Naive thymus-derived CD4-positive, alpha-beta T cell (primary cell): ENCODE measurements at regions of chr6 and their contacts with region 1.

Region 1: DNA sequence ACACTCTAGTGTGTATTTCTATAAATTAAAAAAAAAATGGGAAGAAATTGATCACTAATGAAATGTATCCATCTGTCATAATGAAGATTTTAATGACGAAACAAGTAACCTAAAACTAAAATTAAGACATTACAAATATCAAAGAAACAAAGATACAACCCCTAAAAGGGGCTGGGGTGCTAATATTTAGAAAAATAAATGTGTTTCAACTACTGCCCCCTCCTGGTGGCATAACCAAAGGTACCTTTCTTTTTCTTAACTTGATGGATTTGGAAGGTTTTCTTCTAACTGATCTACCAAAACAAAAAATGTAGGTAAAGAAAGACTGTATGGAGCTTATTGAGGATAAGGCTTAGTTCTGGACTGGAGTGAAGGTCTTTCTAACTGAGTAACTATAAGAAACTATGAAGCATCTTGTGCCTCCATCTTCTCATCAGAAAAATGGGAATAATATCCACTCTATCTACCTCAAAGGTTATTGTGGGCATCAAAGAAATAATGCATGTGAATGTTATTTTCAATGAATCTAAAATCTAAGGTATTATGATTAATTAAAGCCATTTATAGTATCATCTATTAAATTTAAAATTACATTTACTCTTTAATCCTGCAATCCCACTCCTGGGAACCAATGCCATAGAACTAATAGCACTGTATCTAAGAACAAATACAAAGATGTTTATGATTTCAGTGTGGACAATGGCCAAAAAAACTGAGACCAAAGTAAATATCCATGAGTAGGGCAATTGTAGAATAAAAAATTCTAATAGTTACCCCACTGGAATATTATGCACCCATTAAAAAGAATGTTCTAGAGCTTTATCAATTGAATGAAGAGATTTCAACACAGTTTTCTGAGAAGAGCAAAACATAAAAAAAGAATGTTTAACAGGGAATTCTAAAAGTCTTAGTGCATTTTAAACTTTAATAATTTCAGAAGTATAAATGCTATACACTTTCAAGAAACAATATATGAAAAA is 117.2 kb downstream of the BACH2 start:
- DNase-seq: peak in 3 of 9 donors; percentile 39 to 53 (median 43)
- ATAC-seq: no peak
- H3K4me3 ChIP-seq: no peak overlapping the region
- H3K4me3 Mint-ChIP-seq: peak overlapping the region in 5 of 10 donors; percentile 8 to 83 (median 72)
- H3K27ac ChIP-seq: peak overlapping the region; percentile 64
- H3K27ac Mint-ChIP-seq: peak overlapping the region in 8 of 9 donors; percentile 58 to 97 (median 88)
- H3K4me1 ChIP-seq: peaks cover 0 to 69% of the 10 kb centered on the region in 2 donors
- H3K4me1 Mint-ChIP-seq: peaks cover 49 to 92% (median 86%) of the 10 kb centered on the region in 7 donors
- H3K27me3 ChIP-seq: no peaks in the 10 kb centered on the region
- H3K27me3 Mint-ChIP-seq: no peaks in the 10 kb centered on the region

Region 2: DNA sequence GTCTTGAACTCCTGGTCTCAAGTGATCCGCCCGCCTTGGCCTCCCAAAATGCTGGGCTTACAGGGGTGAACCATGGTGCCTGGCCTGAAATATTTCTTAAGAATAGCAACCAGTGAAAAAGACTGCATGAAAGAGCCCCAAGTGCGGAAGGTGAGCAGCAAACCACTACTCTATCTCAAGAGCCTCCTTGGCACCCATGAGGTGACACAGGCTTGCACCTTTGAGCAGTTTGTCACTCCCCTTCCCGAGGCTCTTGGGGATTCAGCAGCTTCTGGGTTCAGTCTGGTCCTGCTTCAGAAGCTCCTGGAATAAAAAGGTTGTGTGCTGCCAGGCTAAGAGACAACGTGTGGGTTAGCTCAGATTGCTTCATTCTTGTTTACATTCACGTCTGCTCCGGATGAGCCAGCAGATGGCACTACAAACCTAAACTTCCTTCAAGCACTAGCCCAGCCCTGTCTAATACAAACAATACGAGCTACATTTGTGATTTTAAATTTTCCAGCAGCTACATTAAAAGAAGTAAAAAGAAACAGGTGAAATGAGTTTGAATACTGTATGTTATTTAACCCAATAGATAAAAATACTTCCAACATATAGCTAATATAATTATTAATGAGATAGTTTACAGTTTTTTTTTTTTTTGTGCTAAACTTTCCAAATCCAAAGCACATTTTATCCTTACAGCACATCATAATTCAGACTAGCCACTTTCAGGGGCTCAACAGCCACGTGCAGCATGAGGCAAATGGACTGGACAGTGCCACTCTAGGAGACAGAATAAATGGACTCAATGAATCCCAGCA is 239.1 kb before region 1 on chr6:
- CTCF ChIA-PET with region 1: interaction called, 8 read pairs
- POLR2A ChIA-PET with region 1: no interaction called
- intact Hi-C with region 1: loop called (anchors 1 kb)
- DNase-seq: peak; percentile 22 to 80 (median 70)
- ATAC-seq: peak; percentile 90
- H3K4me3 ChIP-seq: no peak overlapping the region
- H3K4me3 Mint-ChIP-seq: peak overlapping the region in 1 of 10 donors; percentile 48
- H3K27ac ChIP-seq: peak overlapping the region; percentile 53
- H3K27ac Mint-ChIP-seq: peak overlapping the region in 8 of 9 donors; percentile 50 to 91 (median 78)
- H3K4me1 ChIP-seq: peaks cover 0 to 9% of the 10 kb centered on the region in 2 donors
- H3K4me1 Mint-ChIP-seq: peaks cover 6 to 75% (median 39%) of the 10 kb centered on the region in 7 donors
- H3K27me3 ChIP-seq: no peaks in the 10 kb centered on the region
- H3K27me3 Mint-ChIP-seq: no peaks in the 10 kb centered on the region

Region 3: DNA sequence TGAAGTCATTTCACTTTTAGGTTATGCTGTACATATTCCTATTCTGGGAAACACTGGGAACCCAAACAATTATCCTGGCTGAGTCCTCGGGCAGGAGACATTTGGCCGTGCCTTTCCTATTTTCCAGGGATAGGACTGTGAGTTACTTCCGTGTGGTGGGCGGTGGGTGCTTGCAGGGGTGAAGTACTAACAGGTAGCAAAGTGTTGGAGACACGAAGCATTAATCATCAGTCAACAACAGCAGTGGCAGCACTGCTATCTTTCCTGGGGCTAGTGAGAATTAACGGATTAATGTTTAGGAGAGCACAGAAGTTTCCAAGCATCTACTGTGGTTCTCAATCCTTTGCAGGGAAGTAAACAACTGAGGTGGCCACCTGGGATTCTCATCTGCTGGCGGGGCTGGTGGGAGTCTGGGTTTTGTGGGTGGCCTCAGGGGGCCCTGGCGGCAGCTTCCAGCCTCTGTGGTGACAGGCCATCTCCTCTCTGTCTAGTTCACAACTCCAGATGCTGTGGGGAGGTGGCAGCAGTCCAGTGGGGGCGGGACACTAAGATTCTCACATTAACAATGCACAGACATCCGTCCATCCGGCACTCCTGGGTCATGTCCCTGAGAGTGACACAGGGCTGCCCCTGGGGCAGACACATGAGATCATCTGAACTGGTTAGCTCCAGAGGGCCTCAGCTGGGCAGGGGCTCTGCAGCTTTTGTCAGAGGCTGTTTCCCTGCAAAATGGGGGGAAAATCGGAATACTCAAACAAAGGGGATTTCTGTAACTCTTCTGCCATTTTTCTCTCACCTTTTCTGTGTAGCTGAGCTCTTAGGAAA is 194.3 kb before region 1 on chr6:
- CTCF ChIA-PET with region 1: no interaction called
- POLR2A ChIA-PET with region 1: no interaction called
- intact Hi-C with region 1: no loop called
- DNase-seq: no peak
- ATAC-seq: peak; percentile 20
- H3K4me3 ChIP-seq: no peak overlapping the region
- H3K4me3 Mint-ChIP-seq: peak overlapping the region in 1 of 10 donors; percentile 29
- H3K27ac ChIP-seq: no peak overlapping the region
- H3K27ac Mint-ChIP-seq: peak overlapping the region; percentile 20 to 95 (median 77)
- H3K4me1 ChIP-seq: peaks cover 0 to 24% of the 10 kb centered on the region in 2 donors
- H3K4me1 Mint-ChIP-seq: peaks cover 46 to 90% (median 80%) of the 10 kb centered on the region in 7 donors
- H3K27me3 ChIP-seq: no peaks in the 10 kb centered on the region
- H3K27me3 Mint-ChIP-seq: no peaks in the 10 kb centered on the region

Region 4: GRCh38 chr6:90098001-90098531 is 81.4 kb before region 1 on chr6:
- CTCF ChIA-PET with region 1: interaction called, 3 read pairs
- POLR2A ChIA-PET with region 1: interaction called, 4 read pairs
- intact Hi-C with region 1: loop called in 1 of 2 experiments (anchors 5 kb)
- DNase-seq: peak in 4 of 9 donors; percentile 18 to 58 (median 28)
- ATAC-seq: peak; percentile 72
- H3K4me3 ChIP-seq: no peak overlapping the region
- H3K4me3 Mint-ChIP-seq: peak overlapping the region in 9 of 10 donors; percentile 4 to 71 (median 37)
- H3K27ac ChIP-seq: peak overlapping the region; percentile 4
- H3K27ac Mint-ChIP-seq: peak overlapping the region in 8 of 9 donors; percentile 46 to 89 (median 78)
- H3K4me1 ChIP-seq: peaks cover 0 to 59% of the 10 kb centered on the region in 2 donors
- H3K4me1 Mint-ChIP-seq: peaks cover 49 to 97% (median 88%) of the 10 kb centered on the region in 7 donors
- H3K27me3 ChIP-seq: no peaks in the 10 kb centered on the region
- H3K27me3 Mint-ChIP-seq: peaks cover 0 to 4% (median 0%) of the 10 kb centered on the region in 5 donors

Region 5: DNA sequence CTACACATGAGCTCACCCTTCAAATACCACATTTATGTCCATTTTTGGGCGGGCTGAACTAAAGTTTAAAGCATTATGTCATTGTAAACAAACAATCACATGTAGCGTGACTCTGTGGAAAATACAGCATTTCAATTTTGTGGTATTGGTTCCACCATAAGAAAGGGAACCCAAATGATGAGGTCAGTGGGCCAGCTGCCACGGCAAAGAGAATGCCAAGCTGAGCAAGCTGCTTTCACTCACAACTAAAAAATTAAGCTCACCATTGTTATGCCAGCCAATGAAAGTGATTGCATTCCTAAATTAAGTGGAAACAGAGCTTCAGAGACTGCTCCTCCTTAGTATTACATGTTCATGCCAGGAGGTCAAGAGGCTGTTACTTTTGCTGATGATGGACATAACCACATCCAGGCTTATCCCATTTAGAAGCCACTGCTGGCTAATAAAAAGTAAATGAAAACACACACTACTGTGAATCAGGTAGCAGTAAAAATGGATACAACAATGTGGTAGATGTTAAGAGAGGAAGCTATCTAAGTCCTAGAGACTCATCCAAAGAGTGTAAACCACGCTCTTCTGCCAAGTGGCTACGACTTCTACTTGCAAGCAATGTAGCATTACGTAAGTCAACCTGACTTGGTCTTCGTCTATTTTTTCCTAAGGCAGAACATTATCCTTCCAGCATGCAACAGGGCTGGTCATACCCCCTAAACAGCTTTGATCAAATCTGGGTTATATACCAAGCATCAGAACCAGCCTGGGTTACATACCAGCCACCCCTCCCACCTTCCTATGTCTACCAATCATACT is 47.7 kb before region 1 on chr6:
- CTCF ChIA-PET with region 1: interaction called, 3 read pairs
- POLR2A ChIA-PET with region 1: interaction called, 4 read pairs
- intact Hi-C with region 1: loop called in 1 of 2 experiments (anchors 5 kb)
- DNase-seq: no peak
- ATAC-seq: no peak
- H3K4me3 ChIP-seq: no peak overlapping the region
- H3K4me3 Mint-ChIP-seq: peak overlapping the region in 2 of 10 donors; percentile 14 to 32
- H3K27ac ChIP-seq: no peak overlapping the region
- H3K27ac Mint-ChIP-seq: peak overlapping the region in 8 of 9 donors; percentile 8 to 88 (median 79)
- H3K4me1 ChIP-seq: peaks cover 0 to 40% of the 10 kb centered on the region in 2 donors
- H3K4me1 Mint-ChIP-seq: peaks cover 39 to 85% (median 78%) of the 10 kb centered on the region in 7 donors
- H3K27me3 ChIP-seq: no peaks in the 10 kb centered on the region
- H3K27me3 Mint-ChIP-seq: no peaks in the 10 kb centered on the region

Region 6: DNA sequence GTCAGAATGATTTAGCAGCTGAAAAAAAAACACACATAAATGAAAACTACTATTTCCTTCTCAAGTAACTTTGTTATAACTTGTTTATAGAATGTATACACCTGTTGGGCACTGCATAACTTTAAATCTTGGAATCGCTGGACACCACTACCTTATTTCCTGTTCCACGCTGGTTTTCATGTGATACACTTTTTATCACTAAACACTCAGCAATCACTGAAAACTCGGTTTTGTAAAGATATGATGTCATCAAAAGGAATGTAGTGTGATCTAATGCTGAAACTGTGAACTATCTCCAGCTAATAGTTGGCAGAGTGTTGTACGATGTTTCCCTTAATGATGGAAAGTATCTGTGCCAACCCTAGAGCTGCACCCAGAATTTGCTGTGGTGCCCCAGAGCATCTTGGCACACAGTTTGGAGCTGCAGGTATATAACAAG is 10.8 kb before region 1 on chr6:
- CTCF ChIA-PET with region 1: interaction called, 6 read pairs
- POLR2A ChIA-PET with region 1: interaction called, 3 read pairs
- intact Hi-C with region 1: loop called in 1 of 2 experiments (anchors 1 kb)
- DNase-seq: no peak
- ATAC-seq: no peak
- H3K4me3 ChIP-seq: no peak overlapping the region
- H3K4me3 Mint-ChIP-seq: peak overlapping the region in 2 of 10 donors; percentile 40 to 45
- H3K27ac ChIP-seq: no peak overlapping the region
- H3K27ac Mint-ChIP-seq: peak overlapping the region in 4 of 9 donors; percentile 14 to 62 (median 40)
- H3K4me1 ChIP-seq: peaks cover 0 to 27% of the 10 kb centered on the region in 2 donors
- H3K4me1 Mint-ChIP-seq: peaks cover 11 to 86% (median 75%) of the 10 kb centered on the region in 7 donors
- H3K27me3 ChIP-seq: no peaks in the 10 kb centered on the region
- H3K27me3 Mint-ChIP-seq: no peaks in the 10 kb centered on the region